Colonic mucosa (tissue), 4 donors: ENCODE measurements at regions of chr16 and their contacts with region 1.

Region 1: GRCh38 chr16:70653809-70654771 is 7.7 kb downstream of the IL34 start:
- DNase-seq: peak; percentile 91
- H3K4me3 ChIP-seq: peak overlapping the region; percentile 25
- H3K27ac ChIP-seq: no peak overlapping the region
- H3K4me1 ChIP-seq: peaks cover 3% of the 10 kb centered on the region
- H3K27me3 ChIP-seq: no peaks in the 10 kb centered on the region
- CTCF ChIP-seq: peak; percentile 86

Region 2: DNA sequence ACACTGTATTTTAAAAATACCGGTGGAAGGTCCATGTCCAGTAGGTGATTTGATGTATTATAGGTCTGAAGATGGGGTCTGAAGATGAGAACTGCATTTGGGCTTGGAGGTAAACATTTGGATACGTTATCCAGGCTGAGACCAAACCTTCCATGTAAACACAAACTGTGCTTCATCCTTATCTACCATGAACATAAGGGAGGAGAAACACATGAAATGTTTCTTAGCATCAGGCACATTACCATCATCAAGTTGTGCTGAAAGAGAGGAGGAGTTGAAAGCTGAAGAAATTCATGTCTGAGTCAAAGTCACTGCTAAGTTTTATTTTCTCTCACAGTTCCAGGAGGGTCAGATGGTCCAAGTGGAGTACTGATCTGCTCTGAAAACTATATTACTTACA is 119.1 kb before region 1 on chr16:
- intact Hi-C with region 1: loop called (anchors 5 kb)
- DNase-seq: no peak
- H3K4me3 ChIP-seq: no peak overlapping the region
- H3K27ac ChIP-seq: no peak overlapping the region
- H3K4me1 ChIP-seq: no peaks in the 10 kb centered on the region
- H3K27me3 ChIP-seq: no peaks in the 10 kb centered on the region
- CTCF ChIP-seq: no peak

Region 3: DNA sequence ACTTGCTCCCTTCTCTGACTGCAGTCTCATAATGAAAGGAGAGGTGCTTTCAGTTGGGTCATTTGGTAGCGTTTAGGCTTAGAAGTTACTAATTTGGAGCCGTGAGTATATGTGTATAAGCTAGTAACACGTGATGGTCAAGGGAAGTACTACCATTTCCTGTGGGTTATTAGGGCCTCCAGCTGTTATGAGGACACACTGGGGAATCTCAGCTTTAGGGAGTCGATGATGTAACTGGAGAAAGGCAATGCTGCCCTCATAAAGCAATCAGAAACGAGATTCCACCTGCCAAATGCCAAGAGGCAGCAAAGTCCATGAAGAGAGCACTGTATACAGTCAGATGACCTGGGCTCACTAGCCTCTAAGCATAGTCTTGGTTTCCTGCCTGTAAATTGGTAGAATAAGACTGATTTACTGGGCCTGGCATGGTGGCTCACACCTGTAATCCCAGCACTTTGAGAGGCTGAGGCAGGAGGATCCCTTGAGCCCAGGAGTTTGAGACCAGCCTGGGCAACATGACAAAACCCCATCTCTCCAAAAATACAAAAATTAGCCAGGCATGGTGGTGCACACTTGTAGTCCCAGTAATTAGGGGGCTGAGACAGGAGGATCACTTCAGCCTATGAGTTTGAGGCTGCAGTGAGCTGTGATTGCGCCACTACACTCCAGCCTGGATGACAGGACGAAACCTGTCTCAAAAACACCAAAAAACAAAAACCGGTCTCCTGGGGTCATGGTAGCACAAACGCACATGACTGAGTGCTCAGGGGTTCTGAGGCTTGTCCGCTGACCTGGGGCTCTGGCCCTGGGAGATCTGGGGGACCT is 77.4 kb before region 1 on chr16:
- intact Hi-C with region 1: loop called (anchors 5 kb)
- DNase-seq: peak; percentile 31
- H3K4me3 ChIP-seq: no peak overlapping the region
- H3K27ac ChIP-seq: no peak overlapping the region
- H3K4me1 ChIP-seq: peaks cover 8% of the 10 kb centered on the region
- H3K27me3 ChIP-seq: no peaks in the 10 kb centered on the region
- CTCF ChIP-seq: no peak